ENCODE measurements at regions of chr11 and their contacts with region 1.

Region 1: DNA sequence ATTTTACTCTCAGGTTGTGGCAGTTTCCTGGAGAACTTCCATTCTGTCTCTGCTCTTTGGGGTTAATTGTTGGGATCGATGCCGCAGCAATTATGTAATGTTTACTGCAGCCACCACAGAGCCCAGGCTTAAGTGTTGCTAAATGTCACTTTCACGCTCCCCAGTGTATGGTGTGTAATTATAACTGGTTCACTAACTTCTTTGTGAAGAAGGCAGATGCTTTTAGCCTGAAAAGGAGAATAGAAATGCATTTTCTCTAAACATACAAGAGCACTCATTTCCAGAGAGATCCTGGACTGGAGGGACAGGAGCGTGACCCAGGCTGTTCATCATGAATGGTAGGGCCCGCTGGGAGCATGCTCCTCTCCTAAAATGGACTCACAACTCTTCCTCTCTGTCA is 132.2 kb upstream of the PLET1 start:
- DNase-seq: no peak
- ATAC-seq: no peak
- H3K4me3 ChIP-seq: no peak overlapping the region
- H3K27ac ChIP-seq: no peak overlapping the region
- H3K4me1 ChIP-seq: peaks cover 24% of the 10 kb centered on the region
- H3K27me3 ChIP-seq: no peaks in the 10 kb centered on the region
- CTCF ChIP-seq: no peak

Region 2: DNA sequence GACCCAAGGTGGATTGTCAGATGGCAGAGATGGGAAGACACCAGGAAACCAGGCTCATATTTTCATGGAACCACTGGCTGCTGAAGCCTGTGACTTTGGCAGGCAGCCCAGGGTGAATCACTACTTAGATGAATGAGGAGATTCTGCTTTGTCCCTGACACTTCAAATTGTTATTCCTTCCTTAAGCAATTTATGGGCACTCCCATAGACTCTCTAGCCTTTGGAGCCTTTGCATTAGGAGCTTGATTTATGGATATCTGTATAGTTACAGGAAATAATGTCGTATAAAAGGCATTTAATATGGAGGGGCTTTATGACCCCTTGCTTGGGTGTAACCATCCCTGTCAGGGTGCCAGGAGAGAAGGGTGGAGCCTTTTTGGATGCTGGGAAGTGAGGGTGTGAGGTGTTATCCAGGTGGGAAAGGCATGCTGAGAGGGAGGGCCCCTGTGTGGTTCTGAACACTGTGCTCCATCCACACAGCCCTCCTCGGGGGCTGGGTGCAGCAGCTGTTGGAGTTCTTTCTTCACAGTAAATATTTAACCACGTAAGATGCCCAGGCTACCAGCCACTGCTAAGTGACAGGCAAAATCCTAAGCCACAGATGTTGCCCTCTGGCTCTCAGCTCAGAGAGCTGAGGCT is 264.3 kb before region 1 on chr11:
- intact Hi-C with region 1: no loop called
- DNase-seq: peak; percentile 73 to 75
- ATAC-seq: peak; percentile 55 to 75 (median 64)
- H3K4me3 ChIP-seq: no peak overlapping the region
- H3K27ac ChIP-seq: no peak overlapping the region
- H3K4me1 ChIP-seq: peaks cover 10% of the 10 kb centered on the region
- H3K27me3 ChIP-seq: no peaks in the 10 kb centered on the region
- CTCF ChIP-seq: no peak

Region 3: DNA sequence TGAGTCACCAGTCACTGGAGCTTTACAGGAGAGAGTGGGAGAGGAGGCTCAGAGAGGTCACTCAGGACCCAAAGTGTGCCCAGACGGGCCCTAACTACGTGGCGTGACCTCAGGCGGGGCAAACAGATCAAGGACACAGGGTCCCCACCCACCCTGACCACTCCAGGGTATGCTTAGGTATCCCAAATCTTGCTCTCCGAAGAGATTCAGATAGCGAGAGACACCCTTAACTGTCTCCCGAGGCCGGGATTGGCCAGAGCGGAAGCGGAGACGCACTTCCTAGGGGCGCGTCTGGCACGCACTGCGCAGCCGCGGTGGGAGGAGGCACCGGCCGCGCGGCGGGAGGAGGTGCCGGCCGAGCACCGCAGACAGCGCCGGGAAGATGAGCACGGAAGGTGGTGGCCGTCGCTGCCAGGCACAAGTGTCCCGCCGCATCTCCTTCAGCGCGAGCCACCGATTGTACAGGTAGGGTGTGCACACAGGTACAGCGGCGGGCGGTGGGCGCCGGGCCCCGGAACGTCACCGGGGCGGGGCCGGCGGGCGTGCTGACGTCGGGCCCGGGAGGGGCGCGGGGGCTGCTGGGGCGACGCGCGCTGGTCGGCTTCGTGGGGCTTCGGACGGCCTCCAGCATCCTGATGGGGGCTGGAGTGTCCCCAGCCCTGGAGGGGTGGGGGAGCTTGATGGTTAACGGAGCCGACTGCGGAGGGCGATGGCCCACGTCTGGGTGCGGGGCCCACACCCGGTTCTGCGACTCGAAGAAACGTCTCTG is 166.7 kb before region 1 on chr11 and contains the start of gene PTS:
- intact Hi-C with region 1: no loop called
- DNase-seq: peak; percentile 89 to 94
- ATAC-seq: peak; percentile 96 to 99 (median 98)
- H3K4me3 ChIP-seq: peak within 1 kb of the TSS; percentile 72
- H3K27ac ChIP-seq: peak within 1 kb of the TSS; percentile 99
- H3K4me1 ChIP-seq: peaks cover 14% of the 10 kb centered on the region
- H3K27me3 ChIP-seq: no peaks in the 10 kb centered on the region
- CTCF ChIP-seq: no peak
- total RNA-seq, gene PTS: 26.5 to 47.8 (median 43.7) TPM

Region 4: GRCh38 chr11:112321521-112322172 is 71.3 kb before region 1 on chr11:
- intact Hi-C with region 1: loop called in 1 of 2 experiments (anchors 10 kb)
- DNase-seq: peak in 1 of 2 donors; percentile 63
- ATAC-seq: peak; percentile 67 to 88 (median 88)
- H3K4me3 ChIP-seq: no peak overlapping the region
- H3K27ac ChIP-seq: peak overlapping the region; percentile 53
- H3K4me1 ChIP-seq: peaks cover 42% of the 10 kb centered on the region
- H3K27me3 ChIP-seq: no peaks in the 10 kb centered on the region
- CTCF ChIP-seq: no peak

Region 5: DNA sequence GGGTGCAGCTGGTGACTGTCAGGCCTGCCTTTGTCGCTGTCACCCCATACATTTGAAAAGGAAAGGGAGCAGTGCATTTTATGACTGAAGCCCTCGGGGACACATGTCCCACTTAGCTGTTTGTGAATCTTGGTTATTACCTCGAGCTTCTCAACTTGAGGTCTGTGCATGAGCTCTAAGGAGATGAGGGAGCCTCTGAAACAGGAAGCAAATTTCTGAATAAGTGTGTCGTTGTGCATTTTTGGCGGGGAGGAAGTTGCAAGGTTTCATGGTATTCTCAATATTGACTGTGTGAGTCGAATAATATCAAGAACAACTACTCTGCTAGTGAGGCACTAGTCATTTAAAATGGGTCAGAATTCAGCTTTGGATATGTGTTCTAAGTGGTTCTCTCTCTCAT is 17.4 kb after region 1 on chr11:
- intact Hi-C with region 1: no loop called
- DNase-seq: no peak
- ATAC-seq: no peak
- H3K4me3 ChIP-seq: no peak overlapping the region
- H3K27ac ChIP-seq: no peak overlapping the region
- H3K4me1 ChIP-seq: no peaks in the 10 kb centered on the region
- H3K27me3 ChIP-seq: peaks cover 0 to 5% (median 0%) of the 10 kb centered on the region in 3 donors
- CTCF ChIP-seq: no peak

Region 6: DNA sequence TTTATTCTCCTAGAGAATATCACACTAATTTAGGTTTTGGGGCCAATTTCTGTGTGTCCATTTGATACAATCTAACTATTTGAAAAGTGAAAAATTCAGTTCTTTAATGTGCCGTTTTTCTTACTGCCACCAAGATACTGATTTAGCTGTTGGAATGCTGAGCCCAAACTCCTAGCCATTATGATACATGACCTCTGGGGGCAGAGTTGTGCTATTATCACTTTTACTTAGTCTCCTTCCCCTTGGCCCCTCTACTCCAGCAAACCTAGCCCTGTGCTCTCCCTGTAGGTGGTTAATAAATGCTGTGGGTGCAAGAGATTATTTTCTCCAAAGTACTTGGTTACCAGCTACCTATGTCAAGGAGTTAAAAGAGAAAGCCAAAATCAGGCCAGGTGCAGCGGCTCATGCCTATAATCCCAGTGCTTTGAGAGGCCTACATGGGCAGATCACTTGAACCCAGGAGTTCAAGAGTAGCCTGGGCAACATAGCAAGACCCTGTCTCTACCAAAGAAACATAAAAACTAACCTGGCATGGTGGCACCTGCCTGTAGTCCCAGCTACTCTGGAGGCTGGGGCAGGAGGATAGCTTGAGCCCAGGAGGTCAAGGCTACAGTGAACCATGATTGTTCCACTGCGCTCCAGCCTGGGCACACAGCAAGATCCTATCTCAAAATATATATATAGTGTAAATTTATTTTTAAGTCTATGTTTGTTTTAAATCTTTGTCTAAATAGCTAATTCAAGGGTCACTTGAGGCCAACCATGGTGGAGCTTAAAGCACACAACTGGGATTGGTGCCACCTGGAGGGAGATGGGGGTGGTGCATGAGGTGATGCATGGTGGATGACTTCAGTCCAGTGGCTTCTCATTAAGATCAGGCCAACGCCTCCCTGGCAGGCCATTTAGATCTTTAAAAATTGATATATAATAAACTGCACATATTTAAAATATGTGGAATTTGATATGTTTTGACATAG is 61.0 kb after region 1 on chr11:
- intact Hi-C with region 1: loop called in 1 of 2 experiments (anchors 5 kb)
- DNase-seq: peak; percentile 19 to 61
- ATAC-seq: peak in 3 of 4 donors; percentile 76 to 86 (median 77)
- H3K4me3 ChIP-seq: no peak overlapping the region
- H3K27ac ChIP-seq: no peak overlapping the region
- H3K4me1 ChIP-seq: no peaks in the 10 kb centered on the region
- H3K27me3 ChIP-seq: no peaks in the 10 kb centered on the region
- CTCF ChIP-seq: peak; percentile 53